Tibial artery (tissue), 4 donors: ENCODE measurements at regions of chr4 and their contacts with region 1.

Region 1: DNA sequence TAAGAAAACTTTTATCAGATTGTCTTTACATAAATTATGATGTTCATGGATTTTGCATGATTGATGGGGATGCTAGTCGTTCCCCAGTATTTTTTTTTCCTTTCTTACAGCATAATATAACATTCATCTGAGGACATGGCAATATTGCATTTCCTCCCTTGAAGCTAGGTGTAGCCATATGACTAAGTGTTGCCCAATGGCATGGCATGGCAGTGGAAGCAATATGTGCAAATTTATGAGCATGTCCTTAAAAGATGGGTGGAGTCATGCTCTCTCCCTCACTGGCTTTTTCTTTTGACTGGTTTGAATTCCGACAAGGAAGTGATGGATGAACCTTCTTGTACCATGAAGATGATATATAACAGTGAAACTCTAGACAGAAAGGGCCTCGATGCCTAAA is 96.3 kb downstream of the BANK1 start:
- DNase-seq: no peak
- H3K4me3 ChIP-seq: no peak overlapping the region
- H3K27ac ChIP-seq: no peak overlapping the region
- H3K4me1 ChIP-seq: no peaks in the 10 kb centered on the region
- H3K27me3 ChIP-seq: no peaks in the 10 kb centered on the region
- CTCF ChIP-seq: no peak

Region 2: DNA sequence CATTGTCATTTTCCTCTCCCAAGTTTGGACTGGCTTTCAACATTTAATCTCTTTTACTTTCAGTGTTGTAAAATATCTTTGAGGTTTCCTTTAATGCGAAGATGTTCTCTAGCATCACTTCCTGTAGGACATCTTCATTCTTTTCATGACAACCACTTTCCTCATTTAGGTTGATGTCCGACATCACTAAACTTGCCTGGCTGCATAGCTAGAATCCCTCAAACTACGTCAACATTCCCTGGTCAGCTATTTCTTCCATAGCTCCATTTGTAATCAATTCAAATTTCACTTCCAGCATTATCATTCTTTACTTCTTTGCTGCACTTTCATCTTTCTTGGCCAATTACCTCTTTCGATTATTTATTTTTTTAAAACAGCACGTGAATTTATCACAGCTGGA is 1170.4 kb before region 1 on chr4:
- intact Hi-C with region 1: no loop called
- DNase-seq: no peak
- H3K4me3 ChIP-seq: no peak overlapping the region
- H3K27ac ChIP-seq: no peak overlapping the region
- H3K4me1 ChIP-seq: no peaks in the 10 kb centered on the region
- H3K27me3 ChIP-seq: no peaks in the 10 kb centered on the region
- CTCF ChIP-seq: no peak

Region 3: DNA sequence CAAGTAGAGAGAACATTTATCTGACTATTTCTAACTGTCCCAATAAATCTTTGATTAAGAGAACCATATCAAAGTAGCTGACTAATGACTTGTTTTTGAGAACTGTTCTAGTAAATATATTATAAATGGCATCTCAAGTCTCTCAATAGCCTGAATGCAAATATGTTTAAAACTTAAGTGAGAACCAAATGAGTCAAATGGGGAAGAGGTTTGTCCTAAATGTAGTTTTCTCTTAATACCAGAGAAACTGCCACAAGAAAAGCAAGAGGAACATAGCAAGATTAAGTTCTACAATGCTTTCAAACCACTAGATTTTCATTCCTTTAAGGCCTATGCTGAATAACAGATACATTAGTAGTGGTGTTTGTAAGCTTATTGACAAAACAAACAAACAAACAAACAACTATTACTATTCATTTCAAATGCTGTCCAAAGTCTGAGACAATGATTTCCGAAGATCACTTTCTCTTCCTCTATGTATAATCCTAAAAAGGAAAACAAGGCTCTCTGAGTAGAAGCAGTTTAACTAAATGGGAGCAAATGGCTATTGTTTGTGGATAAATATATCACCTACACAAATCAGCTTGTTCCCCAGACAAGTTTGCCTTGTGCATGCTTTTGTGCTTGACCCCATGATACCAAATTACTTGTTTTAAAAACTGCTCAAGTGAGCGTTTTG is 960.6 kb before region 1 on chr4:
- intact Hi-C with region 1: no loop called
- DNase-seq: no peak
- H3K4me3 ChIP-seq: no peak overlapping the region
- H3K27ac ChIP-seq: no peak overlapping the region
- H3K4me1 ChIP-seq: no peaks in the 10 kb centered on the region
- H3K27me3 ChIP-seq: no peaks in the 10 kb centered on the region
- CTCF ChIP-seq: no peak

Region 4: GRCh38 chr4:101823864-101824263 is 63.0 kb before region 1 on chr4:
- intact Hi-C with region 1: loop called (anchors 2 kb)
- DNase-seq: no peak
- H3K4me3 ChIP-seq: no peak overlapping the region
- H3K27ac ChIP-seq: no peak overlapping the region
- H3K4me1 ChIP-seq: no peaks in the 10 kb centered on the region
- H3K27me3 ChIP-seq: no peaks in the 10 kb centered on the region
- CTCF ChIP-seq: no peak

Region 5: GRCh38 chr4:101835121-101835904 is 51.5 kb before region 1 on chr4:
- intact Hi-C with region 1: no loop called
- DNase-seq: no peak
- H3K4me3 ChIP-seq: no peak overlapping the region
- H3K27ac ChIP-seq: no peak overlapping the region
- H3K4me1 ChIP-seq: no peaks in the 10 kb centered on the region
- H3K27me3 ChIP-seq: no peaks in the 10 kb centered on the region
- CTCF ChIP-seq: no peak